Heart right ventricle (tissue), 16 donors: ENCODE measurements at regions of chr6 and their contacts with region 1.

Region 1: DNA sequence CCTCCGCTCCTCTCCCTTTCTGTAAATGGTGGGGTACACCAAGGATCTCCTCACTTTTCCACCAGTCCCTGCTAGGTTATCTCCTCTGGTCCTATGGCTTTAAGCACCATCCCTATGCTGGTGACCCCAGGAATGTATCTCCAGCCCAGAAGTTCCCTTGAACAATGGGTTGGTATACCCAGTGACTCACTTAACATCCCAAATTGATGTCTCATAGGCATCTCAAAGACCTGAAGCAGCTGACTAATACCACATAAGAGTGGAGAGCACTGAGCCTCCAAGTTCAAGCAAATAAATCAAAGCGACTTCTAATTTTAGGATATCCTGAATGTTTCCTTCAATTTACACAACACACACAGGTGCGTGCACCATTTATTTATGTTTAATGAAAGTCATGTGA is 48.3 kb downstream of the ADGRF1 start:
- DNase-seq: no peak
- ATAC-seq: no peak
- H3K4me3 ChIP-seq: no peak overlapping the region
- H3K27ac ChIP-seq: no peak overlapping the region
- H3K4me1 ChIP-seq: peaks cover 2 to 28% (median 20%) of the 10 kb centered on the region in 9 donors
- H3K27me3 ChIP-seq: peaks cover 0 to 7% (median 0%) of the 10 kb centered on the region in 7 donors
- CTCF ChIP-seq: no peak

Region 2: DNA sequence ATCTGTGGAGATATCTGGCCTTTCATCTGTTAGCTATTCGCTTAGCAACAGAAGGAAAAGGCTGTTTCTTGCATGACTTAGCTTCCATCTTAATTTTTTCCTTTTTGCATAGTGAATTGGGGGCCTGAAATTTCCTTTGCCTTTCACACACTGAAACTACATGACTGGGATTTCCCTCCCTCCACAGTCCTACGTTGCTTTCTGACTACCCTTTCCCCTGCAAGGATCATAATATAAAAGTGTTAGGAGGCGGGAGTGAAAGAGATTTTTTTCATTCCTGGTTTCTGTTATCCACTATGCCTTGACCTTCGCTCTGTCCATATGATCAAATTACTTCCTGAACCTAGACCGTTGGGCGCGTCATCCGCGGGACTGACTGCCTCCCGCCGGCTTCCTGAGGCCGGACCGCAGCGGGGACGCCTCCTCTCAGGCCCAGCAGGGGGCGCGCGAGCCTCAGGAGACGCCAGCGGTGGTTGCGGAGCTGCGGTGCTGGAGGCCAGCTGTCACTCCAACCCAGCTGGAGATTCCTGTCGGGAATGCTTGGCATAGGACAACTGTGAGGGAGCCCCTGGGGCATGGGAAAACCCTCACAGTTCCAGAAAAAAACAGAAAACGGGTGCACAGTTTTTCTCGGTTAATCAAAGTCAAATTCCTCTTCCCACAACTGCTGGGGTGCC is 145.0 kb before region 1 on chr6:
- intact Hi-C with region 1: loop called in 9 of 10 experiments (anchors 1 to 5 kb)
- DNase-seq: peak; percentile 83 to 88
- ATAC-seq: peak; percentile 90 to 97 (median 94)
- H3K4me3 ChIP-seq: peak overlapping the region in 4 of 10 donors; percentile 17 to 32 (median 22)
- H3K27ac ChIP-seq: peak overlapping the region in 2 of 10 donors; percentile 21 to 51
- H3K4me1 ChIP-seq: peaks cover 4 to 54% (median 38%) of the 10 kb centered on the region in 9 donors
- H3K27me3 ChIP-seq: no peaks in the 10 kb centered on the region
- CTCF ChIP-seq: peak; percentile 93 to 99 (median 99)

Region 3: DNA sequence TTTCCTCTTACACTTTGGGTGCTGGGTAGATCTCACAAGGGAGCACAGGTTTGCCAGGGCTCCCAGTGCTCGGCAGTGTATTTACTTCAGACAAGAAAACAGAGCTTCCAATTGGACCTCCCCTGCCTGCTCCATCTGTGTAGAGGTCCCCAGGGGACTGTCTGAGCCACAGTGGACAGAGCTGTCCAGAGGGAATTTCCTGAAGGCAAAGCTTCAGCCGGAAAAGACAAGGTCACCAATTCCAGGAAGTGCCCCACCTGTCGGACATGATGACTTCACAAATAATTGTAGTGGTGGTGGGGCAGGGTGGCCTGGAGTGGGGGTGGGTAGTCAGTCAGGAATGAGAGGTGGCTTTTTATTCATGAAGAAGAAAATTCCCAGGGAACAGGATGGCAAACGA is 90.7 kb before region 1 on chr6:
- intact Hi-C with region 1: loop called in 4 of 10 experiments (anchors 5 to 10 kb)
- DNase-seq: peak; percentile 26 to 71
- ATAC-seq: peak; percentile 69 to 90 (median 85)
- H3K4me3 ChIP-seq: no peak overlapping the region
- H3K27ac ChIP-seq: peak overlapping the region; percentile 21 to 83 (median 63)
- H3K4me1 ChIP-seq: peaks cover 4 to 98% (median 56%) of the 10 kb centered on the region in 9 donors
- H3K27me3 ChIP-seq: no peaks in the 10 kb centered on the region
- CTCF ChIP-seq: peak in 4 of 9 donors; percentile 6 to 23 (median 16)

Region 4: GRCh38 chr6:46954837-46955451 is 38.9 kb before region 1 on chr6:
- intact Hi-C with region 1: loop called in 2 of 10 experiments (anchors 5 kb)
- DNase-seq: peak in 1 of 2 donors; percentile 10
- ATAC-seq: peak in 6 of 8 donors; percentile 23 to 64 (median 54)
- H3K4me3 ChIP-seq: peak overlapping the region in 9 of 10 donors; percentile 8 to 54 (median 39)
- H3K27ac ChIP-seq: peak overlapping the region in 8 of 10 donors; percentile 17 to 88 (median 72)
- H3K4me1 ChIP-seq: peaks cover 3 to 37% (median 13%) of the 10 kb centered on the region in 9 donors
- H3K27me3 ChIP-seq: peaks cover 0 to 4% (median 0%) of the 10 kb centered on the region in 7 donors
- CTCF ChIP-seq: no peak

Region 5: DNA sequence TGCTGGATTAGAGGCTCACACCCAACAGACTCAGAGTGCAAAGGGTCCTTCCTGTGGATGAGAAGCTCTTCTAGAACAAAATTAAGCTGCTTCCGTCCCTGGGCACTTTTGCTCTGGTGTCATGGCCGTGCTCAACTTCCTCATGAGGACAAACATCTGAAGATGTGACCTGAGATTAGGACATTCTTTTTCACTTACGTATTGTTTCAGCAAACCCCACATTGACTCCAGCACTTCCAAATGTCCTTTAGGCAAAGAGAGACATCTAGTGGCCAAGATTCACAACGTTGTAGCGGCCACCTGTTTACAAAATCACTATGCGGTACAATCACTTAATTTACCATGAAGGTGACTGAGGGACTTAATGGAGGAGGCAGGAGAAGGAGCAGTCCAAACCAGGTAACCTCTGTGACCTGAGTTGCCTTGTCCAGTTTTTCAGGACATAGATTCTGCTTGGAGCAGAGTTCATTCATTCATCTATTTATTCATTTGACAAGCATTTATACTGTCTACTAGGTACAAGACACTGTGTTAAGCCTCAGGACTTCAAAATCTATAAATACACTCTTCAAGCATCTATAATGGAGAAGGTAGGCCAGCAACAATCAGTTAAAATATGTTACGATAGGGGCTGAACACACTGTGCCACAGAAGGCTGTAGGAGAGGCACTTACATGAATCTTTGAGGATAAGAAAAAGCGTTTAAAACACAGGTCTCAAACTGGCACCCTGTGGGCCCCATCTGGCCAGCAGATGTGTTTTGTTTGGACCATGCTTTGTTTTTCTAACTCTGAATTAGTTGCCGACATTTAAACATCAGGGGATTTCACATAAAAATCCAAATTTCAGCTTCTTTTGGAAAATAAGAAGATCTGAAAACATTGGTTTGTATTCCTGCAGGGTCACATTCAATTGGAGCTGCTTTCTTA is 53.9 kb after region 1 on chr6:
- intact Hi-C with region 1: loop called in 2 of 10 experiments (anchors 5 to 10 kb)
- DNase-seq: peak in 1 of 2 donors; percentile 56
- ATAC-seq: peak; percentile 78 to 94 (median 92)
- H3K4me3 ChIP-seq: no peak overlapping the region
- H3K27ac ChIP-seq: peak overlapping the region in 3 of 10 donors; percentile 36 to 54 (median 49)
- H3K4me1 ChIP-seq: peaks cover 0 to 25% (median 9%) of the 10 kb centered on the region in 9 donors
- H3K27me3 ChIP-seq: no peaks in the 10 kb centered on the region
- CTCF ChIP-seq: peak; percentile 65 to 90 (median 78)